ENCODE measurements at regions of chr19 and their contacts with region 1.

Region 1: DNA sequence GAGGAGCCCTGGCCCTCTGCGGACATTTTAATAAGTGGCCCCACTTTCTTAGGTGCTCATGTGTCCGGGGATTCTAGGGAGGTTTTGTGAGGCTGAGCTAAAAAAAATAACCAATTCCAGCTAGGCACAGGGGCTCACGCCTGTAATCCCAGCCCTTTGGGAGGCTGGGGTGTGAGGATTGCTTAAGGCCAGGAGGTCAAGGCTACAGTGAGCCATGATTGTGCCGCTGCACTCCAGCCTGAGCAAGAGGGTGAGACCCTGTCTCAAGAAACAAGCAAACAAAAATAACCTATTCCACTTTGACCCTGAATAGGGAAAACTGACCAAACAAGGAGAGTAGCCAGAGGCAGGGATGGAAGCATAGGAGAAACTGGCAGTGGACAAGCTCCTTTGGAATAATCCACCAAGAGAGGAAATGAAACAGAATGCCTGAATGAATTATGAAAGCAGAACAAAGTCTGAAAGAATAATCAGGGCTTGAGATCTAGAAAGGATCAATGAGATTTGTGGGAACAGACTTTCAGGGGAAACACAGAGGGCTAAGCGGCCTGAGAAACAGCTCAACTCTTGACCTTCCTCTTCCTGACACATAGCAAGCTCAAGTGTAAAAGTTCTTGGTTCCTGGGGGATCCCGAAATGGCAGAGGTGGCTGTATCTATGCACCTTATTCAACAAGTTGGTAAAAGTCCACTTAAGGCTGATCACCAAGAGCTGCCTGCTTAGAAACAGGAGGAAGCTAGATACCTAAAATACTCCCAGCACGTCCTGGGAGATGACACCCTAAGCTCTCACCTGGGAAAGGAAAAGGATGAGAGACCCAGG is 30.1 kb upstream of the FFAR2 start:
- DNase-seq: no peak
- ATAC-seq: no peak
- H3K4me3 ChIP-seq: no peak overlapping the region
- H3K27ac ChIP-seq: no peak overlapping the region
- H3K4me1 ChIP-seq: no peaks in the 10 kb centered on the region
- H3K27me3 ChIP-seq: no peaks in the 10 kb centered on the region

Region 2: DNA sequence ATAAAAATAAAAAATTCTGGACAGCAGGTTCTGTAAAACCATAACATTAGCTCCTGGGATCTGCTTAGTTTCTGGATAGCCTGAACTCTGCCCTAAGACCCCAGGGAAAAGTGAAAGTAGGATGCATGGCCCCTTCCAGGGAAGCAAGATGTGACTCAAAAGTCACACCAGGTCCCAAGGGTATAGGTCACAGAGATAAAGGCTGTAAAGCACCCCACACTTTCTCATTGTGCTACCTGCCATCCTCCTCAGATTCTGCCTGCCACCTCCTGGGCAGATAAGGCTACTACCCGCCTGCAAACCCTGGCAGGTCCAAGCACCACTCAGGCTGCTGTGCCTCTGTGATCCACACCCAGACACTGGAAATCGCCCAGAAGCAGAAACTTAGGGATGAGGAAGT is 50.7 kb after region 1 on chr19:
- intact Hi-C with region 1: loop called in 1 of 4 experiments (anchors 5 kb)
- DNase-seq: peak; percentile 30 to 65 (median 60)
- ATAC-seq: peak; percentile 90
- H3K4me3 ChIP-seq: no peak overlapping the region
- H3K27ac ChIP-seq: no peak overlapping the region
- H3K4me1 ChIP-seq: no peaks in the 10 kb centered on the region
- H3K27me3 ChIP-seq: no peaks in the 10 kb centered on the region

Region 3: DNA sequence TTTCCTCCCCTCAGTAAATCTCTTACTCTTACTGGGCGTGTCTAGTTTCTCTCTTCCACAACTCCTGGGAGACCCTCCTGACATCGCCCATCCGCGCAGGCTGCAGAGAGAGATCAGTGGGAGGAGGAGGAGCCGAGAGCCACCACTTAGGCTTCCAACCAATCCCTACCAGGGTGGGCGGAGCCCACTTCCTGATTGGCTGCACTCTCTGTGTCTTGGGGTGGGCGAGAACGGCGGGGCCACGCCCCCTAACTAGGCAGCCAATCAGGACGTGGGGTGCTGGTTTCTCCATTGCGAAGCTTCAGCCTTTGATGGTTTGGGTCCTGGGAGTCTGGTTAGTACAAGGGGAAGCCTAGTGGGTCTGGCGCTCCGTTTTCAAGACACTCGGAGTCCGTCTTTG is 167.9 kb after region 1 on chr19 and contains the start of gene PMIS2:
- intact Hi-C with region 1: no loop called
- DNase-seq: peak in 1 of 3 donors; percentile 53
- ATAC-seq: peak in 1 of 2 donors; percentile 44
- H3K4me3 ChIP-seq: no peak within 1 kb of the TSS
- H3K27ac ChIP-seq: no peak within 1 kb of the TSS
- H3K4me1 ChIP-seq: no peaks in the 10 kb centered on the region
- H3K27me3 ChIP-seq: no peaks in the 10 kb centered on the region
- total RNA-seq, gene PMIS2: not detected

Measured in right cardiac atrium (tissue), 5 donors.